GM12878 (cell line): ENCODE measurements at regions of chr6 and their contacts with region 1.

Region 1: GRCh38 chr6:41591859-41592502 is 45.8 kb downstream of the FOXP4 start:
- DNase-seq: peak; percentile 9
- ATAC-seq: peak; percentile 92
- H3K4me3 ChIP-seq: no peak overlapping the region
- H3K27ac ChIP-seq: no peak overlapping the region
- H3K4me1 ChIP-seq: no peaks in the 10 kb centered on the region
- H3K27me3 ChIP-seq: no peaks in the 10 kb centered on the region
- CTCF ChIP-seq: peak; percentile 86 to 96 (median 94); a peak in 5 of 6 replicates
- EP300 ChIP-seq: no peak
- POLR2A ChIP-seq: 0 out of 2 replicates have a peak, but pooled peaks have one; percentile 11
- RAD21 ChIP-seq: peak; percentile 96

Region 2: DNA sequence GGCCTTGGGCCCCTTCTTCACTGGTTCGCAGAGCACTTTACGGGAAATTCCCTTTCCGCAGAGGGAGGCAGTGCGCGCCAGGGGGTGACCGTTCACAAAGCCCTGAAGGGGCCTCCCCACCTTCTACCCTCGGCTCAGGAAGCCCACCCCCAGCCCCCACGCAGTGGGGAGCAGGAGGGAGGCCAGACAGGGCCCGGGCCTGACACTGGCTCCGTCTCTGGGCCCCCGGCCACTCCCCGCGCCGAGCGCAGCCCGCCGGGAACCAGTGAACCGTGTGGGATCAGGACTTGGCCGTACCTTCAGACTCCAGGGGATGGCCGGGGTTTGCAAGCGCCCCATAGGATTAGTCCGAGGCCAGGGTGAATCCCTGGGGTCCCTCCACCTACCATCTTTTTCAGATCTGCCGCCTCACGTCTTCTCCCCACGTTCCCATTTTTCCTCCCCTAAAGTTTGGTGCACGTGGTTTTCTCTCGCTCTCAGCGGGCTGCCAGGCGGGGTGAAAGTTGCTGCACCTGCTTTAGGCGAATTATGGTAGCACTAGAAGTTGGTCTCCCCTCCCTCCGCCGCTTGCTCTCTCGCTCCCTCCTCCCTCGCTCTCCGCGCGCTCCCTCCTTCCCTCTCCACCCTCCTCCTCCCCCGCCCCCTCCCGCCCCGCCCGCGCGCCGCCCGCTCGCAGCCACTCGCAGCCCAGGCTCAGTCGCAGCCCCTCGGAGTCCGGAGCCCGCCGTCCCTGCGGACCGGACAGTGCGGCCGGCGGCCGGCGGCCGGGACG is 46.1 kb before region 1 on chr6 and contains the start of gene FOXP4:
- CTCF ChIA-PET with region 1: interaction called, 3 read pairs
- POLR2A ChIA-PET with region 1: no interaction called
- RAD21 ChIA-PET with region 1: interaction called, 3 read pairs
- SMC1A ChIA-PET with region 1: no interaction called
- in situ Hi-C with region 1: no loop called
- intact Hi-C with region 1: loop called (anchors 5 kb)
- DNase-seq: peak; percentile 73
- ATAC-seq: peak; percentile 85
- H3K4me3 ChIP-seq: peak within 1 kb of the TSS; percentile 91
- H3K27ac ChIP-seq: peak within 1 kb of the TSS; percentile 74
- H3K4me1 ChIP-seq: peaks cover 16% of the 10 kb centered on the region
- H3K27me3 ChIP-seq: no peaks in the 10 kb centered on the region
- CTCF ChIP-seq: no peak
- EP300 ChIP-seq: no peak
- POLR2A ChIP-seq: peak; percentile 65
- RAD21 ChIP-seq: 0 out of 2 replicates have a peak, but pooled peaks have one; percentile 0
- polyA plus RNA-seq, gene FOXP4: 0.31 to 0.40 TPM

Region 3: DNA sequence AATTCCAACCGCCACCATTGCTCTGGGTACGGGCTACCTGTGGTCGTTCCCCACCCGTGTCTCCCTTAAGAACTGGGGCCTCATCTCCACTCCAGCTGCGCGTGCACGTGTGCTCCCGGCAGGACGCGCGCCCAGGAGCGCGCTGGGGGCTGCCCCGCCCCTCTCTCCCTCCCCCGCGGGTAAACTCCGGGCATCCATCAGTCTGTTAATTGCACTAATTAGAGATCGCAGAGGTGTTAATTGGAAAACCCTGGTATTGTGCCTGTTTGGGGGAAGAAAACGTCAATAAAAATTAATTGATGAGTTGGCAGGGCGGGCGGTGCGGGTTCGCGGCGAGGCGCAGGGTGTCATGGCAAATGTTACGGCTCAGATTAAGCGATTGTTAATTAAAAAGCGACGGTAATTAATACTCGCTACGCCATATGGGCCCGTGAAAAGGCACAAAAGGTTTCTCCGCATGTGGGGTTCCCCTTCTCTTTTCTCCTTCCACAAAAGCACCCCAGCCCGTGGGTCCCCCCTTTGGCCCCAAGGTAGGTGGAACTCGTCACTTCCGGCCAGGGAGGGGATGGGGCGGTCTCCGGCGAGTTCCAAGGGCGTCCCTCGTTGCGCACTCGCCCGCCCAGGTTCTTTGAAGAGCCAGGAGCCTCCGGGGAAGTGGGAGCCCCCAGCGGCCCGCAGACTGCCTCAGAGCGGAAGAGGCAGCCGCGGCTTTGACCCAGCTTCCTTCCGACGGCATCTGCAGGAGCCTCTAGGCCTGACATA is 31.4 kb before region 1 on chr6:
- CTCF ChIA-PET with region 1: no interaction called
- POLR2A ChIA-PET with region 1: interaction called, 9 read pairs
- RAD21 ChIA-PET with region 1: no interaction called
- SMC1A ChIA-PET with region 1: no interaction called
- in situ Hi-C with region 1: no loop called
- intact Hi-C with region 1: loop called (anchors 1 kb)
- DNase-seq: no peak
- ATAC-seq: peak; percentile 92
- H3K4me3 ChIP-seq: peak overlapping the region; percentile 53
- H3K27ac ChIP-seq: peak overlapping the region; percentile 42; the same call in 1 of the 2 replicates
- H3K4me1 ChIP-seq: peaks cover 5% of the 10 kb centered on the region; the same call in 1 of the 2 replicates
- H3K27me3 ChIP-seq: no peaks in the 10 kb centered on the region
- CTCF ChIP-seq: 0 out of 6 replicates have a peak, but pooled peaks of 1 of the 3 experiments have one; percentile 3
- EP300 ChIP-seq: no peak
- POLR2A ChIP-seq: peak; percentile 60
- RAD21 ChIP-seq: 0 out of 2 replicates have a peak, but pooled peaks have one; percentile 4

Region 4: DNA sequence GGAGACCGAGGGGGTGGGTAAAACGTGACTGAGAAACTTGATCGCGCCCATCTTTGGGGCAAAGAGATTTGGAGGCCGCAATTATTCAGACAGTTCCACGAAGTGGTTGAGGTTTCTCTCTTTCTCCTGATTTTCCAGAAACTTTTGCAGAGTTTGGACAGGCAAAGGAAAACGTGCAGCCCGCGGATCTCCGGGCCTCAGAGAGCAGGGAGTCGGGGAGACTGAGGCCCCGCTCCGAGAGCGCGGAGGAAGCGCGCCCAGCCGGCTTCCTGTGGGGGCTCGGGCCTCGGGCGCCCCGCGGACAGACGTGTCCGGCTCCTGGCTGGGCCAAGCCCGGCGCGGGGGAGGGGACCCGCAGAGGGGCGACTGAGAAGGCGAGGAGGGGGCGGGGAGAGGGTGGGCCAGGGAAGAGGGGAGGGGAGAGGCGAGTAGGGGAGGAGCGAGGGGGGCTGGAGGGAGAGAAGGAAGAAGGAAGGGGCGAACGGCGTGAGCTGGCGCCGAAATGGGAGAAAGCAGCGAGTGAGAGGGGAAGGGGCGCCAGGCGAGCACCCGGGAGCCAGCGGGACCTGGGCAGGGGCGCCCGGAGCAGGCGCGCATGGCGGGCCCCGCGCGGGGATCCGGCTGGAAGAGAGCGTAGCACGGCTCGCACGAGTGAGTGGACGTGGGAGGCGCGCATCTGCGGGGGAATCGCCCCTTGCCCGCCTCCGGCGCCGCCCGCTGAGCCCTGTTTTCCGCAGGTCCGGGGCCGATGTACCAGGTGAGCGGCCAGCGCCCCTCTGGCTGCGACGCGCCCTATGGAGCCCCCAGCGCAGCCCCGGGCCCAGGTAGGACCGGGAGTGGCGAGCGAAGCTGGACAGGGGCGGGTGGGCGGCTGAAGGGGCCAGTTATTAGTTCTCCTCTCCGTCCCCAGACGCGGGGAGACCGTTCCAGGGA is 46.3 kb after region 1 on chr6 and contains the start of gene MDFI:
- CTCF ChIA-PET with region 1: no interaction called
- POLR2A ChIA-PET with region 1: no interaction called
- RAD21 ChIA-PET with region 1: no interaction called
- SMC1A ChIA-PET with region 1: no interaction called
- in situ Hi-C with region 1: no loop called
- intact Hi-C with region 1: no loop called
- DNase-seq: no peak
- ATAC-seq: no peak
- H3K4me3 ChIP-seq: no peak within 1 kb of the TSS
- H3K27ac ChIP-seq: no peak within 1 kb of the TSS
- H3K4me1 ChIP-seq: no peaks in the 10 kb centered on the region
- H3K27me3 ChIP-seq: peaks cover 10 to 18% of the 10 kb centered on the region in 2 experiments
- CTCF ChIP-seq: no peak
- EP300 ChIP-seq: no peak
- POLR2A ChIP-seq: no peak
- RAD21 ChIP-seq: no peak
- polyA plus RNA-seq, gene MDFI: not detected